ENCODE measurements at regions of chr2 and their contacts with region 1.

Region 1: GRCh38 chr2:219199470-219200211 is 6.9 kb upstream of the ZFAND2B start:
- DNase-seq: no peak
- H3K4me3 ChIP-seq: no peak overlapping the region
- H3K4me3 Mint-ChIP-seq: peak overlapping the region in 6 of 7 donors; percentile 12 to 90 (median 34)
- H3K27ac ChIP-seq: no peak overlapping the region
- H3K27ac Mint-ChIP-seq: peak overlapping the region in 5 of 8 donors; percentile 2 to 61 (median 44)
- H3K4me1 ChIP-seq: peaks cover 8% of the 10 kb centered on the region
- H3K4me1 Mint-ChIP-seq: peaks cover 18 to 24% (median 19%) of the 10 kb centered on the region in 3 donors
- H3K27me3 ChIP-seq: no peaks in the 10 kb centered on the region
- H3K27me3 Mint-ChIP-seq: no peaks in the 10 kb centered on the region

Region 2: GRCh38 chr2:219177552-219178376 is 21.9 kb before region 1 on chr2 and contains the start of gene RETREG2:
- CTCF ChIA-PET with region 1: interaction called, 17 read pairs
- POLR2A ChIA-PET with region 1: interaction called, 88 read pairs
- DNase-seq: peak; percentile 73 to 90 (median 85)
- H3K4me3 ChIP-seq: peak within 1 kb of the TSS; percentile 64
- H3K4me3 Mint-ChIP-seq: peak within 1 kb of the TSS; percentile 94 to 98 (median 96)
- H3K27ac ChIP-seq: peak within 1 kb of the TSS; percentile 85
- H3K27ac Mint-ChIP-seq: peak within 1 kb of the TSS; percentile 95 to 100 (median 99)
- H3K4me1 ChIP-seq: peaks cover 54% of the 10 kb centered on the region
- H3K4me1 Mint-ChIP-seq: peaks cover 55 to 79% (median 75%) of the 10 kb centered on the region in 3 donors
- H3K27me3 ChIP-seq: no peaks in the 10 kb centered on the region
- H3K27me3 Mint-ChIP-seq: no peaks in the 10 kb centered on the region
- total RNA-seq, gene RETREG2: 67.6 to 76.1 TPM

Region 3: DNA sequence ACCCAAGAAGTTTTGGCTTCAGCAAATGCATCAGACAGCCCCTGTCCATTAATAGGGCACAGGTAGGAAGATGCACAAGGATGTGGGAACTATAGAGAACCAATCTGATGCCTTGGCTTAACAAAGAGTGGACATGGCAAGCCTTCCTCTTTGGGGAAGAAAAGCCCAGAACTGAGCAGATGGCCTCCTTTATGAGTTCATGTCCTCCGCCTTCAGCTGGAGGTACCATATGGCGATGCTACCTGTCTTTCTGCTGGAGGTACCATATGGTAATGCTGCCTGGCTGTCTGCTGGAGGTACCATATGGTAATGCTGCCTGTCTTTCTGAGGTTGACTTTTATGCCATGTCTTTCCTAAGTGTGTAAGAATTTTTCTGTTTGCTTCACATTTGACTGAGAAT is 15.5 kb before region 1 on chr2:
- CTCF ChIA-PET with region 1: interaction called, 17 read pairs
- POLR2A ChIA-PET with region 1: interaction called, 6 read pairs
- DNase-seq: no peak
- H3K4me3 ChIP-seq: no peak overlapping the region
- H3K4me3 Mint-ChIP-seq: peak overlapping the region in 1 of 7 donors; percentile 68
- H3K27ac ChIP-seq: no peak overlapping the region
- H3K27ac Mint-ChIP-seq: peak overlapping the region in 3 of 8 donors; percentile 37 to 73 (median 66)
- H3K4me1 ChIP-seq: peaks cover 23% of the 10 kb centered on the region
- H3K4me1 Mint-ChIP-seq: peaks cover 32 to 45% (median 42%) of the 10 kb centered on the region in 3 donors
- H3K27me3 ChIP-seq: no peaks in the 10 kb centered on the region
- H3K27me3 Mint-ChIP-seq: no peaks in the 10 kb centered on the region